ENCODE measurements at regions of chr12 and their contacts with region 1.

Region 1: DNA sequence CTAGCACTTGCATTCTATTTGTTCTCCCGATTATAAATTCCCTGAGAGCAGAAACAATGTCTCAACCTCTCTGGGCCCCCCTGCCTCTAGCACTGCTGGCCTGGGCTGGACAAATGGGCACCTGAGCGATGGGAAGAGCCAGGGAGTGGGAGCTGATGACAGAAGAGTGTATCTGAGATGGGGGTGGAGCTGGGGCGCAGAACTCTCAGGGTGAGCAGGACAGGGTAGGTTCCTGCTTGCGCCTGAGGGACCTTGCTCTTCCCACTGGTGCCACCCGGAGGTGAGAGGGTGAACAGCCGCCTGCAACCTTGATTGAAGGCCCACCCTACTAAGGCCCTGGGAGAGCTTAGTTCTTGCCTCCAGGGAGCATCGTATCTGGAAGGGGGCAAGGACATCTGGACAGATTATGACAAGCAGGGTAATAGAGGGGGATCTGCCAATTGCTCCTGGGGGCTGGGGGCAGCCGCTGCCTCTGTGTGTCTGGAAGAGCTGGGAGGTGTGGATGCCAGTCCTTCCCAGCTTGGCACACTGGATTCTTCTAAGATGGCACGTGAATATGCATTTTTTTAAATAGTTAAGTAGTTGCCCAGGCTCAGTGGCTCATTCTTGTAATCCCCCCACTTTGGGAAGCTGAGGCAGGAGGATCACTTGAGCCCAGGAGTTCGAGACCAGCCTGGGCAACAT is 43.0 kb upstream of the TSPAN9 start:
- DNase-seq: peak; percentile 17
- H3K4me3 ChIP-seq: no peak overlapping the region
- CTCF ChIP-seq: peak; percentile 88

Region 2: DNA sequence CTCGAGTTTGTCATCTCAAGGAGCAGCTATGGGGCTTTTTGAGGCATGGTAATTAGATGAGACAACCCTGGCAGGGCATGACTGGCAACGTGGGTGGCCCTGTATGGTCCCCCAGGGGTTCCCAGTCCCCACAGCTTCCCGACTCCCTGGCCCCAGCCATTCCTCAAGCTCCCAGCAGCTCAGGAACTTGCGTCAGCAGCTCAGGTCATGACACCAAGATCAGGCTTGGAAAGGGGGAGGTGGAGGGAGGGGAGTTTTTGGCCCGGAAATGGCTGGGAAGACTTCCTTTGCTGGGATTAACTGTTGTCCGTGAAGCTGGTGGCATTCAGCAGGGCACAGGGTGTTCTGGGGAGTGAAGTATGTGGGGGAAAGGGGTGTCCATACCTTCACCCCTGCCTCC is 188.9 kb before region 1 on chr12:
- CTCF ChIA-PET with region 1: interaction called, 14 read pairs
- POLR2A ChIA-PET with region 1: no interaction called
- DNase-seq: peak; percentile 34
- H3K4me3 ChIP-seq: no peak overlapping the region
- CTCF ChIP-seq: no peak

Region 3: DNA sequence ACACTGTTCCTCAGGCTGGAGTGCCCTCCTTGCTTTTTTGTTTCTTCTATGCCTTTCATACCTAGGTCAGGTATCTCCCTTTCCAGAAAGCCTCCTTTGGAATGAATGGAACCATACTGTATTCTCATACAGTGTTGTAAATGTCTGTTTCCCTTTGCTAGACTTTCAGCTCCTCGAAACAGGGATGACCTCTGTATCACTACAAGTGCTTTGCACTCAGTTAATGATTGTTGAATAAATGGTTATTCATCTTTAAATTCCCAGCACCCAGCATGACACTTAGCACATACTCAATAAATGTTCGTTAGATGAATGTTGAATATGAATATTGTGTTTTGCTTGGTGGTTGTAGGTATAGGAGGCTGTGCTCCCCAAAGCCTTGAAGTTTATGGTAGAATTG is 149.4 kb before region 1 on chr12:
- CTCF ChIA-PET with region 1: interaction called, 18 read pairs
- POLR2A ChIA-PET with region 1: no interaction called
- DNase-seq: no peak
- H3K4me3 ChIP-seq: no peak overlapping the region
- CTCF ChIP-seq: no peak

Region 4: DNA sequence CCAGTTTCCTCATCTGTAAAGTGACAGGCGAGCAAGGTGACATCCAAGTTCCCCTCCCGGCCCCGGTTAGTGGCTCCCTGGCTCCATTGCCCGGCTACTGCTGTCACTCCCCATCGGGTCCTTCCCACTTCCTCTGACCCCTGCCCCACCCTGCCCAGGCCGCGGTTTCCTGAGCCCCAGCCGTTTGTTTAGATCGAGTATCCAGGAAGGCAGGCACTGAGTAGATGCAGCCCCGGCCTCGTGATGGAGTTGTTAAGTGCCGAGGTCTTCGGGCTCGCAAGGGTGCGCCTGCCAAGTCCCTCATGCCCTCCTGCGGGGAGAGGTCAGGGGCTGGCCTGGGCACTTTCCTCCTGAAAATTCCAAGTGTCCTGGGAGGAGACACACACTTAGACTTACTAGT is 19.6 kb before region 1 on chr12:
- CTCF ChIA-PET with region 1: interaction called, 40 read pairs
- POLR2A ChIA-PET with region 1: no interaction called
- DNase-seq: no peak
- H3K4me3 ChIP-seq: no peak overlapping the region
- CTCF ChIP-seq: no peak

Region 5: GRCh38 chr12:3020850-3021435 is 13.3 kb before region 1 on chr12:
- CTCF ChIA-PET with region 1: interaction called, 40 read pairs
- POLR2A ChIA-PET with region 1: no interaction called
- DNase-seq: no peak
- H3K4me3 ChIP-seq: no peak overlapping the region
- CTCF ChIP-seq: no peak

Region 6: DNA sequence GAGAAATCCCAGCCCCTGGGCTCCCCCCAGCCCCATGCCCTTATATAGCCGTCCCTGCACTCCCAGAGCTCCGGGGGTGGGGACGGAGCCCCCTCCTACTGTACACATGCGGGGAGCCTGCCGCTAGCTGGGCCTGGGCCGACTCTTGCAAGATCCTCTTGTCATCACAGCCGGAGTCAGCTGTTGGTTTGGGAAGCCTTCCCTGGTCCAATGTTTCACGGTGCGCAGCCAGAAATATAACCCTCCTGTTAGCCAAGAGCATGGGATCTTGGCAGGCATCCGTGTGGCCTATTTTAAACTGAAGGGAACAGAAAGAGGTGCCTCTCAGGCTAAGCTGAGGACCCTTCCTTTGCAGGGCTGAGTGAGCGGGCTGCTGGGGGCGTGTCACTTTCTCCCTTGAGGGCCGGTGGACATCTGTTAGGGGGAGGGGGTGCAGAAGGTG is 218.3 kb after region 1 on chr12:
- CTCF ChIA-PET with region 1: no interaction called
- POLR2A ChIA-PET with region 1: no interaction called
- DNase-seq: no peak
- H3K4me3 ChIP-seq: no peak overlapping the region
- CTCF ChIP-seq: no peak